Ascending aorta (tissue), 2 donors: ENCODE measurements at regions of chr6 and their contacts with region 1.

Region 1: GRCh38 chr6:10528170-10528981 is 7.2 kb downstream of the GCNT2 start:
- DNase-seq: peak in 1 of 2 donors; percentile 75
- H3K4me3 ChIP-seq: peak overlapping the region; percentile 57 to 67
- H3K27ac ChIP-seq: peak overlapping the region; percentile 80 to 92
- H3K4me1 ChIP-seq: peaks cover 0 to 10% of the 10 kb centered on the region in 2 donors
- H3K27me3 ChIP-seq: no peaks in the 10 kb centered on the region
- CTCF ChIP-seq: no peak

Region 2: DNA sequence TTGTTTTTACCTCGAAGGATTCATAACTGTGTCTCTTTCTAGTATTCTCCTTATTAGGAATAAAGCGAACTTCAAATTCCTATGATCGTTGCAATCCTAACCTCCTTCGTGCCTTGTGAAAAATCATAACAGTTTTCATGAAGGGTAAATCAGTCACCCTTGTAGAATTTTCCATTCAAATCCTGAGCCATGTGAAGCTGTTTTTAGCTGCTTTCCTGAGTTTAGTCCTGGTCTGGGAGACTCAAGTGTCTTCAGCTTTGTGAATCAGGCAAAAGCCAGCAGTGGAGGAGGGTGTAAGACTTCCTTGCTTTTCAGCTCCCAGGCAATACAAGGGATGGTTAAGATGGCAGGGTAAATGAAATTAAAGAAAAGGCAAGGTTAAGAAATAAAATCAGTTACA is 17.1 kb after region 1 on chr6:
- intact Hi-C with region 1: loop called (anchors 1 kb)
- DNase-seq: peak in 1 of 2 donors; percentile 72
- H3K4me3 ChIP-seq: peak overlapping the region in 1 of 2 donors; percentile 39
- H3K27ac ChIP-seq: peak overlapping the region; percentile 90 to 95
- H3K4me1 ChIP-seq: peaks cover 6 to 49% of the 10 kb centered on the region in 2 donors
- H3K27me3 ChIP-seq: no peaks in the 10 kb centered on the region
- CTCF ChIP-seq: no peak

Region 3: DNA sequence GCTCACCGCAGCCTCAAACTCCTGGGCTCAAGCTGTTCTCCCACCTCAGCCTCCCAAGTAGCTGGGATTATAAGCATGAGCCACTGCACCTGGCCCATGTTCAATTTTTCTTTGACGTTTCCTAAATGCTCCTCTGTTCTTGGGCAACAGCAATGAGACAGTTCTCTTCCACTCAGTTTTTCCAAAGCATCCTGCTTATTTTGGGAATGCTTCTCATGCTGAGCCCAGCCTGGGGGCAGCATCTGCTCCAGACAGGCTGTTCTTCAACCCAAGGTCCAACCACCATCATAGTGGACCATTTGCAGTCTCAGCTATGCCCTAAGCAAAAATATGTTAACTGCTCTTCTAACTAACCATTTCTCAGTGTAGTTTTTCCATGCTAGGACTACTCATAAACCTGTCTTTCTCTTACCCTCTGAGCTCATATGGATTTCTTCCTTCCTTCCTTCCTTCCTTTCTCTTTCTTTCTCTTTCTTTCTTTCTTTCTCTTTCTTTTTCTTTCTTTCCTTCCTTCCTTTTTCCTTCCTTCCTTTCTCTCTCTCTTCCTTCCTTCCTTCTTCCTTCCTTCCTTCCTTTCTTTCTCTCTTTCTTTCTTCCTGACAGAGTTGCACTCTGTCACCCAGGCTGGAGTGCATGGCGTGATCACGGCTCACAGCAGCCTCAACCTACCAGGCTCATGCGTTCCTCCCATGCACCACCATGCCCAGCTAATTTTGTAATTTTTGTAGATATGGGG is 41.2 kb after region 1 on chr6:
- intact Hi-C with region 1: loop called (anchors 5 kb)
- DNase-seq: peak in 1 of 2 donors; percentile 71
- H3K4me3 ChIP-seq: no peak overlapping the region
- H3K27ac ChIP-seq: peak overlapping the region; percentile 19 to 60
- H3K4me1 ChIP-seq: no peaks in the 10 kb centered on the region
- H3K27me3 ChIP-seq: no peaks in the 10 kb centered on the region
- CTCF ChIP-seq: no peak